Activated CD8-positive, alpha-beta T cell treated with anti-CD3 and anti-CD28 coated beads for 36 hours (primary cell): ENCODE measurements at regions of chr11 and their contacts with region 1.

Region 1: DNA sequence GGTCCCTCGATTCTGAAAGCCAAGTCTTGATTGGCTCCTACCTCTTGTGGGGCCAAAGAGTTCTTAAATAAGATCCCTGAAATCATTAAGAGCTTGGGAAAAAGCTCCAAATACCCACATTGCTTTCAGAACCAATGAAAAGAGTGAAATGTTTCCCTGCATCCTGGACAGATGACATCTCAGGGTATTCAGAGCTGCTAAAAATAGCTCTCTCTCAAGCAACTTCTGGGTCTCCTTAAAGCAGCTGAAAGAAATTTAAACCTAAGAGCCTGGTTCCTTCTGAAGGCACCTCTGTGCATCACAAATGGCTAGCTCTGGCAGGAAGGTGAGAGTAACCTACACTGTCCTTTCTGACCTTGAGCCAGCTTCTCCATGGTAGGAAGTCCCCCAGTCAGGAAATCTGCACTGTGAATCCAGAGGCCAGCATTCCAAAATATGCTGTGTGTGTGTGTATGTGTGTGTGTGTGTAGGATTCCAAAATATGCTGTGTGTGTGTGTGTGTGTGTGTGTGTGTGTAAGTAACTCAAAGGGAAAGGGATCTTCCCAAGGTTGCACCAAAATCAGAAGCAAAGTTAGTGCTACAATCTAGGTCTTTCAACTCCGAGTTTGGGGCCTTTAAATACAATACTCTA is 50.1 kb downstream of the RELT start:
- DNase-seq: no peak
- ATAC-seq: no peak
- H3K4me3 Mint-ChIP-seq: no peak overlapping the region
- H3K27ac Mint-ChIP-seq: no peak overlapping the region
- H3K4me1 Mint-ChIP-seq: peaks cover 10% of the 10 kb centered on the region
- H3K27me3 Mint-ChIP-seq: no peaks in the 10 kb centered on the region
- CTCF ChIP-seq: no peak

Region 2: DNA sequence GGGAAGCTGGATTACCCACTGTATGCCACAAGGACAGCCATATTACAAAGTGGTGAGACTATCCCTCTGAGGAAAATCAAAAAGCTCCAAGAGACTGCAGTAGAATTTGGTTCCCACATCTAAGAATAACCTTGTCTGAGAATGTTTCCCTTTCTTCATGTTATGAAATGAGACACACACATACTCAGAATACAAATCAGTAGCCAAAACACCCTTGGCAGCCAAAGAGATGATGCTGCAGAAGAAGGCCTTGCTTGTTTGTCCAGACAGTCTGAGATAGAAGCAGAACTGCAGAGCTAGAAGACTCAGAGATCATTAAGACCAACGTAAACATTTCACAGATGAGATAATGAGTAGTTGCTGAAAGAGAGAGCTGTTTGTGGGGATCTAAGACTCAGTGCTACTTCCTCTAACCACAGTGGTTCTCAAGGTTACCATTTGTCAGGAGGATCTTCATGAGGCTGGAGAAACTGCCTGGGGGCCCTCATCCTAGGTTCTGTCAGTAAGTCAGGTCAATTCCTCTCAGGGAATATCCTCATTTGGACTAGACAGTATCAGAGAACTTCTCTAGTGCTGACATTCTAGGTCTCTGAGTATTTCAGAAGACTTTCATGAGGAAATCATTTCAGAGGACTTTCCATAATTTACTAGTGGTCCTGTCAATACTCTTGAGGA is 11.2 kb before region 1 on chr11:
- CTCF ChIA-PET with region 1: interaction called, 13 read pairs
- POLR2A ChIA-PET with region 1: interaction called, 3 read pairs
- intact Hi-C with region 1: no loop called
- DNase-seq: no peak
- ATAC-seq: peak; percentile 10
- H3K4me3 Mint-ChIP-seq: no peak overlapping the region
- H3K27ac Mint-ChIP-seq: no peak overlapping the region
- H3K4me1 Mint-ChIP-seq: peaks cover 3% of the 10 kb centered on the region
- H3K27me3 Mint-ChIP-seq: no peaks in the 10 kb centered on the region
- CTCF ChIP-seq: no peak